ENCODE measurements at regions of chr6 and their contacts with region 1.

Region 1: DNA sequence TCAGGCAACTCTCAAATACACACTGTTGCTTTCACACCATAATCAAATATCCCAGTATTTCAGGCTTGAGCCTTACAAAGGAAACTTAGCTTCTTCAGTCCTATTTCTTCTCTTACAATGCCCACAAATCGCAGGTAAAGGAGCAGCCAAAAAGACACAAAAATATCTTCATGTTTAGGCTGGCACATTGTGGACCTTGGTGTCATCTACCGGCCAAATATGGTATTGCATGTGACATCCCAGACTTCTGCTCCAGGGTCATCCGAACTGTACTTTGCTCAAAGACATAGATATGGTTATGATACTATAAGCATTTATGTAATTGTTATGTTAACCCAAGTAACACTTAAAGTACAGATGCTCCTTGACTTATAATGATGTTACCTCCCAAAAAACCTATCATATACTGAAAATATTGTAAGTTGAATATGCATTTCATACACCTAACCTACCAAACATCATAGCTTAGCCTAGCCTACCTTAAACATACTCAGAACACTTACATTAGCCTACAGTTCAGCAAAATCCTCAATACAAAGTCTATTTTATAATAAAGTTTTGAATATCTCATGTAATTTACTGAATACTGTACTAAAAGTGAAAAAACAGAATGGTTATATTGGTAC is 4.6 kb downstream of the OR2H2 start:
- DNase-seq: no peak
- ATAC-seq: peak; percentile 77
- H3K4me3 Mint-ChIP-seq: no peak overlapping the region
- H3K27ac Mint-ChIP-seq: no peak overlapping the region
- H3K4me1 Mint-ChIP-seq: peaks cover 2% of the 10 kb centered on the region
- H3K27me3 Mint-ChIP-seq: peaks cover 16% of the 10 kb centered on the region
- CTCF ChIP-seq: peak; percentile 79

Region 2: DNA sequence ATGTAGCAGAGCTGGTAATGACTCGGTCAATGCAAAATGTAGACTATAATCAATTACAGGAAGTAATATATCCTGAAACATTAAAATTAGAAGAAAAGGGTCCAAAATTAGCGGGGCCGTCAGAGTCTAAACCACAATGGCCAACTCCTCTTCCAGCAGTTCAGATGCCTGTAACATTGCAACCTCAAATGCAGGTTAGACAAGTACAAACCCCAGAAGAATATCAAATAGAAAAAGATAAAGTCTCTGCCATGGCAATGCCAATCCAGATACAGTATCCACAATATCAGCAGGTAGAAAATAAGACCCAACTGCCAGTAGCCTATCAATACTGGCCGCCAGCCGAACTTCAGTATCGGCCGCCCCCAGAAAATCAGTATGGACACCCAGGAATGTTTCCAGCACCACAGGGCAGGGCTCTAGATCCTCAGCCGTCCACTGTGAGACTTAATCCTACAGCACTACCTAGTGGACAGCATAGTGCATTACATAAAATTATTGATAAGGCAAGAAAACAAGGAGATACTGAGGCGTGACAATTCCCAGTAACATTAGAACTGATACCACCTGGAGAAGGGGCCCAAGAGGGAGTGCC is 905.5 kb before region 1 on chr6:
- CTCF ChIA-PET with region 1: interaction called, 5 read pairs
- POLR2A ChIA-PET with region 1: no interaction called
- intact Hi-C with region 1: loop called (anchors 1 kb)
- DNase-seq: no peak
- ATAC-seq: no peak
- H3K4me3 Mint-ChIP-seq: no peak overlapping the region
- H3K27ac Mint-ChIP-seq: no peak overlapping the region
- H3K4me1 Mint-ChIP-seq: peaks cover 3% of the 10 kb centered on the region
- H3K27me3 Mint-ChIP-seq: peaks cover 66% of the 10 kb centered on the region
- CTCF ChIP-seq: no peak

Region 3: DNA sequence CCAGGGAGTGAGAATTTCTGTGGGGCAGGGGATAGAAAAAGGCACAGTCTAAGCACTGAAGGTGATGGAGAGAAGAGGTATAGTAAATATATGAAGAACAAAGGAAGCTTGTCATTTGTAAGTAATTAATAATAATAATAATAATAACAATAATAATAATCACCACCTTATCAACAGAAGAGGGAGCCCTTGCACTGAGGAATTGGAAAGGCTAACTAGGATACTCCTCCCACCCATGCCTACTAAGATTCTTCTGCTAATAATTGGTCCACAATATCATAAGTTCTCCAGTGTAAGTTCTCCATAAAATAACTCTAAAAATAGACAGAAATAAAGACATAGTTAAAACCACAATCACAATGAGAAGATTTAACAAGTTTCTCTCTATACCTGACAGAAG is 213.5 kb before region 1 on chr6:
- CTCF ChIA-PET with region 1: no interaction called
- POLR2A ChIA-PET with region 1: no interaction called
- intact Hi-C with region 1: loop called (anchors 5 kb)
- DNase-seq: no peak
- ATAC-seq: no peak
- H3K4me3 Mint-ChIP-seq: no peak overlapping the region
- H3K27ac Mint-ChIP-seq: no peak overlapping the region
- H3K4me1 Mint-ChIP-seq: no peaks in the 10 kb centered on the region
- H3K27me3 Mint-ChIP-seq: peaks cover 21% of the 10 kb centered on the region
- CTCF ChIP-seq: no peak

Region 4: DNA sequence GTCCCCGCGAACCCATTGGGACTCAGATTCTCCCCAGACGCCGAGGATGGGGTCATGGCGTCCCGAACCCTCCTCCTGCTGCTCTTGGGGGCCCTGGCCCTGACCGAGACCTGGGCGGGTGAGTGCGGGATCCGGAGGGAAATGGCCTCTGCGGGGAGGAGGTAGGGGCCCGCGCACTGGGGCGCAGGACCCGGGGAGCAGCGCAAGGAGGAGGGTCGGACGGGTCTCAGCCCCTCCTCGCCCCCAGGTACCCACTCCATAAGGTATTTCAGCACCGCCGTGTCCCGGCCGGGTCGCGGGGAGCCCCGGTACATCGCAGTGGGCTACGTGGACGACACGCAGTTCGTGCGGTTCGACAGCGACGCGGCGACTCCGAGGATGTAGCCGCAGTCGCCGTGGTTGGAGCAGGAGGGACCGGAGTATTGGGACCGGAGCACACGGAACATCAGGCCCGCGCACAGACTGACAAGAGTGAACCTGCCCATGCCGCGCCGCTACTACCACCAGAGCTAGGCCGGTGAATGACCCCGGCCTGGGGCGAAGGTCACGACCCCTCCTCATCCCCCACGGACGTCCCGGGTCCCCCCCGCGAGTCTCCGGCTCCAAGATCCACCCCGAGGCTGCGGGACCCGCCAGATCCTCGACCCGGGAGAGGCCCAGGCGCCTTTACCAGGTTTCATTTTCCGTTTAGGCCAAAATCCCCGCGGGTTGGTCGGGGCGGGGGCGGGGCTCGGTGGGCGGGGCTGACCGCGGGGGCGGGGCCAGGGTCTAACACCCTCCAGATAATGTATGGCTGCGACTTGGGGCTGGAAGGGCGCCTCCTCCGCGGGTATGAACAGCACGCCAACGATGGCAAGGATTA is 337.1 kb after region 1 on chr6:
- CTCF ChIA-PET with region 1: no interaction called
- POLR2A ChIA-PET with region 1: no interaction called
- intact Hi-C with region 1: no loop called
- DNase-seq: peak; percentile 50
- ATAC-seq: peak; percentile 77
- H3K4me3 Mint-ChIP-seq: peak overlapping the region; percentile 90
- H3K27ac Mint-ChIP-seq: peak overlapping the region; percentile 94
- H3K4me1 Mint-ChIP-seq: peaks cover 16% of the 10 kb centered on the region
- H3K27me3 Mint-ChIP-seq: no peaks in the 10 kb centered on the region
- CTCF ChIP-seq: no peak